B cell (primary cell): ENCODE measurements at regions of chr21 and their contacts with region 1.

Region 1: DNA sequence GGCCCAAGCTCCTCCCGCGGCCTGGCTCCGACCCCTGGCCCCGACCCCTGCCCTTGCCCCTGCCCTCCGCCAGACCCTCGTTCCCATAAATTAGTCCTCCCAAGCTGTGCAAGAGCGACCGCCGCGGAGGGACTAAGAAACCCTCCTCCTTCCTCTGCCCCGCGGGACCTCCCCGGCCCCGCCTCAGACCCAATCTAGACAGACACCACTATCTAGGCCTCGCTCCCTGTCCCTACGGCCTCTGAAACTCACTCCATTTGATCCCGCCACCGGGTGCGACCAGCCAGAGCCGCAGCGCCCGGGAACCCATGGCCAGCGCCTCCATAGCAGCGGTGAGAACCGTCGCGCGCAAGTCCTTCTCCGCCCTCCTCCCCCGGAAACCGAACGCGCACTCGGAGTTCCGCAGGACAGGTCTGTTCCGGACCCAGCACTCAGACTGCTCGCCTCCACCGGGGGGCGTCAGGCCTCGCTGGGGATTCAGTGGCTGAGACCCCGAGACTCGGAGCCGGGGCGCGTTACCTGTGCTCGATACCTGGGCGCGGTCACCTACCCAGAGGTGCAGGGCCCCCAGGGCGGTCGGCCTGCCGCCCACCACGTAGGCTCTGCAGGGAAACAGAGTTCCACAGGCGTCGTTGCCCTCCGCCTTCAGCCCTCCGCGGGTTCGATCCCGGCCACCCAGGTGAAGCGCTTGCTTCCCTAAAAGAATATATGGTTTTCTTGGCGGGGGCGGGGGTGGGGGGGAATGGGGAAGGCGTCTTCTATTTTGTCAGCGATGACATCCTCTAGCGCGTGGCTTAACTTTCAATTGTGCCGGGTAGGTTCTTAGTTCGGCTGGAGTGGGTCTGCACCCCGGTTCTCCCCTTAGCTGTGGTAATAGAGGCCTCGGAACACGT is at the start of gene MRPL39:
- DNase-seq: peak; percentile 91
- ATAC-seq: peak; percentile 89
- H3K4me3 ChIP-seq: peak within 1 kb of the TSS; percentile 71 to 91 (median 89)
- H3K4me3 Mint-ChIP-seq: peak within 1 kb of the TSS; percentile 99
- H3K27ac ChIP-seq: peak within 1 kb of the TSS; percentile 72 to 89
- H3K27ac Mint-ChIP-seq: peak within 1 kb of the TSS; percentile 99
- H3K4me1 ChIP-seq: peaks cover 28 to 30% of the 10 kb centered on the region in 2 donors
- H3K4me1 Mint-ChIP-seq: peaks cover 38% of the 10 kb centered on the region
- H3K27me3 ChIP-seq: no peaks in the 10 kb centered on the region
- H3K27me3 Mint-ChIP-seq: no peaks in the 10 kb centered on the region
- CTCF ChIP-seq: no peak
- total RNA-seq, gene MRPL39: 18.1 and 19.7 TPM in 2 replicates

Region 2: DNA sequence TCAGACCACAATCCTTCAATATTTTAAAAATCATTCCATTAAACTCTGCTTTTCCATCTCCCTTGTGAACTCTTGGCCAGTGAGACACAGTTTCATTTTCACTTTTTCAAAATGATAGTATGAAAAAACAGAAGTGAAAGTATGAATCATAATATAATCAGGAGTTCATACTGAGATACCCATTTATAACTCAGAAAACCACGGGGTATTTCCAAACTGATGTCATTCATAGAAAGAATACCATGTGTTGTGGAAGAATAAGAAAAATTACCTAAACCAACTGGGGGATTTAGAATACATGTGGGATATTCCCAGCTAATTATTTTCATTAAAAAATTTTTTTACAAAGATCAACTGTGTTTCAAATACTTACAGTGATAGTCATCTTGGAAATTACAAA is 150.0 kb before region 1 on chr21:
- CTCF ChIA-PET with region 1: no interaction called
- POLR2A ChIA-PET with region 1: no interaction called
- intact Hi-C with region 1: loop called (anchors 1 kb)
- DNase-seq: peak; percentile 88
- ATAC-seq: peak; percentile 82
- H3K4me3 ChIP-seq: peak overlapping the region in 1 of 5 experiments; percentile 44
- H3K4me3 Mint-ChIP-seq: peak overlapping the region; percentile 62
- H3K27ac ChIP-seq: peak overlapping the region; percentile 90 to 94
- H3K27ac Mint-ChIP-seq: peak overlapping the region; percentile 75
- H3K4me1 ChIP-seq: peaks cover 23 to 26% of the 10 kb centered on the region in 2 donors
- H3K4me1 Mint-ChIP-seq: peaks cover 45% of the 10 kb centered on the region
- H3K27me3 ChIP-seq: no peaks in the 10 kb centered on the region
- H3K27me3 Mint-ChIP-seq: no peaks in the 10 kb centered on the region
- CTCF ChIP-seq: no peak

Region 3: DNA sequence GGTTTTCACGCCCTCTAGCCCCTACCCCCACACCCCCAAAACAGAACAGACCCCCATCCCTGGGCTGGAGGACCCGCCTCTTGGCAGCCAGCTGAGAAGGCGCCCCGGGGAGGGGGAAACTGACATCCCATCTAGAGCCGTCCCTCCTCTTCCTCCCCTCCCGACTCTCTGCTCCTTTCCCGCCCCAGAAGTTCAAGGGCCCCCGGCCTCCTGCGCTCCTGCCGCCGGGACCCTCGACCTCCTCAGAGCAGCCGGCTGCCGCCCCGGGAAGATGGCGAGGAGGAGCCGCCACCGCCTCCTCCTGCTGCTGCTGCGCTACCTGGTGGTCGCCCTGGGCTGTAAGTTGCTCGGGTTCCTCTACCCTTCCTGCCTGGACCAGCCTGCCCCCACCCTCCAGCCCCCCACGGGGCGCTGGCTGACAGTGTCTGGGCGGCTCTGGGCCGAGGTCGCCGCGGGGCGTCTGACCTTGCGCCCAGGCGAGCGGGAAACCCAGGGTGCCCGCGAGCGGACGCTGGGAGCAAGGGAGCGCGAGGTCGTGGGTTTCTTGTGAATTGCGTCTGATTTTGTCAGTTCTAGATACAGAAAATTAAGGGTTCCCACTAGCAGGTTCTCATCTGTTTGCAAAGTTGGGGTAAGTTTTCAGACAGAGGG is 32.3 kb after region 1 on chr21:
- CTCF ChIA-PET with region 1: interaction called, 30 read pairs
- POLR2A ChIA-PET with region 1: no interaction called
- intact Hi-C with region 1: loop called (anchors 1 kb)
- DNase-seq: peak; percentile 79
- ATAC-seq: peak; percentile 88
- H3K4me3 ChIP-seq: peak overlapping the region; percentile 32 to 85 (median 69)
- H3K4me3 Mint-ChIP-seq: peak overlapping the region; percentile 84
- H3K27ac ChIP-seq: peak overlapping the region; percentile 58 to 68
- H3K27ac Mint-ChIP-seq: peak overlapping the region; percentile 81
- H3K4me1 ChIP-seq: peaks cover 13 to 14% of the 10 kb centered on the region in 2 donors
- H3K4me1 Mint-ChIP-seq: peaks cover 19% of the 10 kb centered on the region
- H3K27me3 ChIP-seq: no peaks in the 10 kb centered on the region
- H3K27me3 Mint-ChIP-seq: peaks cover 7% of the 10 kb centered on the region
- CTCF ChIP-seq: peak; percentile 53

Region 4: GRCh38 chr21:25734904-25735645 is 127.7 kb after region 1 on chr21 and contains the starts of genes ATP5PF and GABPA:
- CTCF ChIA-PET with region 1: interaction called, 11 read pairs
- POLR2A ChIA-PET with region 1: interaction called, 10 read pairs
- intact Hi-C with region 1: loop called (anchors 1 kb)
- DNase-seq: peak; percentile 99
- ATAC-seq: peak; percentile 83
- H3K4me3 ChIP-seq: peak within 1 kb of the TSS; percentile 69 to 99 (median 95)
- H3K4me3 Mint-ChIP-seq: peak within 1 kb of the TSS; percentile 100
- H3K27ac ChIP-seq: peak within 1 kb of the TSS; percentile 86 to 87
- H3K27ac Mint-ChIP-seq: peak within 1 kb of the TSS; percentile 100
- H3K4me1 ChIP-seq: peaks cover 44 to 46% of the 10 kb centered on the region in 2 donors
- H3K4me1 Mint-ChIP-seq: peaks cover 58% of the 10 kb centered on the region
- H3K27me3 ChIP-seq: no peaks in the 10 kb centered on the region
- H3K27me3 Mint-ChIP-seq: no peaks in the 10 kb centered on the region
- CTCF ChIP-seq: no peak
- total RNA-seq, gene ATP5PF: 34.1 and 36.6 TPM in 2 replicates
- total RNA-seq, gene GABPA: 29.7 and 32.9 TPM in 2 replicates

Region 5: GRCh38 chr21:25967573-25968438 is 360.4 kb after region 1 on chr21:
- CTCF ChIA-PET with region 1: no interaction called
- POLR2A ChIA-PET with region 1: no interaction called
- intact Hi-C with region 1: loop called (anchors 10 kb)
- DNase-seq: peak; percentile 78
- ATAC-seq: peak; percentile 94
- H3K4me3 ChIP-seq: peak overlapping the region in 1 of 5 experiments; percentile 45
- H3K4me3 Mint-ChIP-seq: peak overlapping the region; percentile 80
- H3K27ac ChIP-seq: peak overlapping the region; percentile 76 to 95
- H3K27ac Mint-ChIP-seq: peak overlapping the region; percentile 99
- H3K4me1 ChIP-seq: peaks cover 26 to 32% of the 10 kb centered on the region in 2 donors
- H3K4me1 Mint-ChIP-seq: peaks cover 32% of the 10 kb centered on the region
- H3K27me3 ChIP-seq: no peaks in the 10 kb centered on the region
- H3K27me3 Mint-ChIP-seq: no peaks in the 10 kb centered on the region
- CTCF ChIP-seq: no peak